Activated CD4-positive, alpha-beta memory T cell treated with anti-CD3 and anti-CD28 coated beads, Interleukin-2, amount 10 ng/mL, durations not matched to agents 7 days and 5 days (primary cell): ENCODE measurements at regions of chr12 and their contacts with region 1.

Region 1: GRCh38 chr12:103965590-103966504 is at the start of gene TDG:
- DNase-seq: peak; percentile 97
- H3K4me3 Mint-ChIP-seq: peak within 1 kb of the TSS; percentile 97
- H3K27ac Mint-ChIP-seq: peak within 1 kb of the TSS; percentile 91
- H3K4me1 Mint-ChIP-seq: peaks cover 60% of the 10 kb centered on the region
- H3K27me3 Mint-ChIP-seq: no peaks in the 10 kb centered on the region
- total RNA-seq, gene TDG: 33.0 to 34.4 TPM

Region 2: DNA sequence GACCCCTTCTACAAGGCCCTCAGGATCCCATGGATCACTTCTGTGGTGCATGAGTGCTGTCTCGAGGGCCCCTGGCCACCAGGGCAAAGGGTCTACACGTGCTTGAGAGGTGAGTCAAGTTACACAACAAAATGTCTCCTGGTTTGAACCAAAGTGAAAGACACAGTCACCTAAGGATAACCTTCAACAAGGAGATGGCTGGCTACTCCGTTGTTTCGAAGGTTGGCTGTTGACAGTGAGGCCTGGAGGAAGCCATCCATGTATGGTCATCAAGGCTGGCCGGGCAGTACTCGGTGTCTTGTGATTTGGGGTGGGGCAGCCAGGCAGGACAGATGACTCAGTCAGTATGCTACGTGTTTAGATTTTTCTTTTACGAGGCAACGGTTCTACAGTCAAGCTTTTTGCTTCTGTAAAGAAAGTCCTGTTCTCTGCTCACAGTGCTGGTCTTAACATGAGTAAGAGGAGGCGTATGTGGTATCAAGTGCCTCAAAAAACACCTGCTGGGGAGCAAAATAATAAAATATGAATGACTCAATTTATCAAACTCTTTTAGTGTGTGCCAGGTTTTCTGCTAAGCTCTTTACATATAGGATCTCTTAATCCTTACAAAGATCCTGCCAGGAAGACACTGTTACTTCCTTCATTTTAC is 106.8 kb before region 1 on chr12:
- CTCF ChIA-PET with region 1: no interaction called
- POLR2A ChIA-PET with region 1: no interaction called
- DNase-seq: no peak
- H3K4me3 Mint-ChIP-seq: no peak overlapping the region
- H3K27ac Mint-ChIP-seq: no peak overlapping the region
- H3K4me1 Mint-ChIP-seq: no peaks in the 10 kb centered on the region
- H3K27me3 Mint-ChIP-seq: no peaks in the 10 kb centered on the region

Region 3: DNA sequence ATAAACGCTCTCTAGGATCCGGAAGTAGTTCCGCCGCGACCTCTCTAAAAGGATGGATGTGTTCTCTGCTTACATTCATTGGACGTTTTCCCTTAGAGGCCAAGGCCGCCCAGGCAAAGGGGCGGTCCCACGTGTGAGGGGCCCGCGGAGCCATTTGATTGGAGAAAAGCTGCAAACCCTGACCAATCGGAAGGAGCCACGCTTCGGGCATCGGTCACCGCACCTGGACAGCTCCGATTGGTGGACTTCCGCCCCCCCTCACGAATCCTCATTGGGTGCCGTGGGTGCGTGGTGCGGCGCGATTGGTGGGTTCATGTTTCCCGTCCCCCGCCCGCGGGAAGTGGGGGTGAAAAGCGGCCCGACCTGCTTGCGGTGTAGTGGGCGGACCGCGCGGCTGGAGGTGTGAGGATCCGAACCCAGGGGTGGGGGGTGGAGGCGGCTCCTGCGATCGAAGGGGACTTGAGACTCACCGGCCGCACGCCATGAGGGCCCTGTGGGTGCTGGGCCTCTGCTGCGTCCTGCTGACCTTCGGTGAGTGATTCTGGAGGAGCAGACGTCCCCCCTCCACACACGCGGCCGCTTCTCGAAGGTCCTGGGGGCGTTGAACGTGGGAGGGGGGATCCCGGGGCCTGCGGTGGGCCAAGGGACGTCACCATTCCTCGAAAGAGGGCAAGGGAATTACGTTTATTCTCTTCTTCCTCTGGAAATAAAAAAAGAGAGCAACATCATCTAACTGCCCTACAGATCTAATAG is 35.6 kb before region 1 on chr12 and contains the start of gene HSP90B1:
- CTCF ChIA-PET with region 1: interaction called, 9 read pairs
- POLR2A ChIA-PET with region 1: interaction called, 128 read pairs
- DNase-seq: peak; percentile 100
- H3K4me3 Mint-ChIP-seq: peak within 1 kb of the TSS; percentile 83
- H3K27ac Mint-ChIP-seq: peak within 1 kb of the TSS; percentile 100
- H3K4me1 Mint-ChIP-seq: peaks cover 61% of the 10 kb centered on the region
- H3K27me3 Mint-ChIP-seq: no peaks in the 10 kb centered on the region
- total RNA-seq, gene HSP90B1: 375 to 378 TPM

Region 4: DNA sequence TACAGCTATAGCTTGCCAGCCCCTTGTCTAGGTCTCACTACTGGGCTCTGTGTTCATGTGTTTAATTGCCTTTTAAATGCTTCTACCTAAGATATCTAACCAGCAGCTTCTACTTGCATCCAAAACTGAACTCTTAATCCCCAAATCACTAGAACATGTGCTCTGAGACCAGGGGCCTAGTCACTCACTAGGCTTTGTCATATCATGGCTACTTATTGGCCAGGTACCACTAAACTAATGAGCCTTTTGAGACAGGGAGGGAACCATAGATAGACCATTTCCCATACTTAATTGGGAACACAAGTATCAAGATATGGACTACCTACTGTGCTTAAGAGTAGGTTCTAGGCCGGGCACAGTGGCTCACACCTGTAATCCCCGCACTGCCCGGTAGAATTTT is 29.2 kb before region 1 on chr12:
- CTCF ChIA-PET with region 1: no interaction called
- POLR2A ChIA-PET with region 1: interaction called, 12 read pairs
- DNase-seq: no peak
- H3K4me3 Mint-ChIP-seq: no peak overlapping the region
- H3K27ac Mint-ChIP-seq: no peak overlapping the region
- H3K4me1 Mint-ChIP-seq: peaks cover 57% of the 10 kb centered on the region
- H3K27me3 Mint-ChIP-seq: no peaks in the 10 kb centered on the region

Region 5: DNA sequence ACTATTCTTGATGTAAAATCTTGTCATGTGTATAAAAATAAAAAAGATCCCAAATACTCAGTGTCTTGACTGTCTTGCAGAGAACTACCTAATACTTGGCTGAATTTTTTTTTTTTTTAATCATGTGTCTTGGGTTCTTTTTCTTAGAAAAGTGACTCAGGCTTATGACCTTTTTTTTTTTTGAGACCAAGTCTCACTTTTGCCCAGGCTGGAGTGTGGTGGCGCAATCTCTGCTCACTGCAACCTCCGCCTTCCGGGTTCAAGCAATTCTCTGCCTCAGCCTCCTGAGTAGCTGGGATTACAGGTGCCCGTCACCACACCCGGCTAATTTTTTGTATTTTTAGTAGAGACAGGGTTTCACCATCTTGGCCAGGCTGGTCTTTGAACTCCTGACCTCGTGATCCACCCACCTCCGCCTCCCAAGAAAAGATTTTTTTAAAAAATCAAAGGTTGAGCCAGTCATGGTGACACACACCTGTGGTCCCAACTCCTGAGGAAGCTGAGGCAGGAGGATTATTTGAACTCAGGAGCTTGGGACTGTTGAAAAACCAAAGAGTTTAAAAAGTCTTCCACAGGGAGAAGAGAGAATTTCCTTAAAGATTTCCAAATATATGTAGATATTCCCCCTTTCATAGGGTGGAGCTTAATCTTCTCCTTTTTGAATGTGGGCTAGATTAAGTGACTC is 17.8 kb before region 1 on chr12:
- CTCF ChIA-PET with region 1: interaction called, 3 read pairs
- POLR2A ChIA-PET with region 1: interaction called, 159 read pairs
- DNase-seq: no peak
- H3K4me3 Mint-ChIP-seq: no peak overlapping the region
- H3K27ac Mint-ChIP-seq: peak overlapping the region; percentile 49
- H3K4me1 Mint-ChIP-seq: peaks cover 52% of the 10 kb centered on the region
- H3K27me3 Mint-ChIP-seq: no peaks in the 10 kb centered on the region

Region 6: GRCh38 chr12:103978384-103978982 is 12.6 kb after region 1 on chr12:
- CTCF ChIA-PET with region 1: interaction called, 3 read pairs
- POLR2A ChIA-PET with region 1: interaction called, 12 read pairs
- DNase-seq: no peak
- H3K4me3 Mint-ChIP-seq: no peak overlapping the region
- H3K27ac Mint-ChIP-seq: no peak overlapping the region
- H3K4me1 Mint-ChIP-seq: peaks cover 10% of the 10 kb centered on the region
- H3K27me3 Mint-ChIP-seq: no peaks in the 10 kb centered on the region

Region 7: GRCh38 chr12:104003596-104003995 is 37.7 kb after region 1 on chr12:
- CTCF ChIA-PET with region 1: no interaction called
- POLR2A ChIA-PET with region 1: no interaction called
- DNase-seq: no peak
- H3K4me3 Mint-ChIP-seq: no peak overlapping the region
- H3K27ac Mint-ChIP-seq: no peak overlapping the region
- H3K4me1 Mint-ChIP-seq: no peaks in the 10 kb centered on the region
- H3K27me3 Mint-ChIP-seq: peaks cover 51% of the 10 kb centered on the region

Region 8: DNA sequence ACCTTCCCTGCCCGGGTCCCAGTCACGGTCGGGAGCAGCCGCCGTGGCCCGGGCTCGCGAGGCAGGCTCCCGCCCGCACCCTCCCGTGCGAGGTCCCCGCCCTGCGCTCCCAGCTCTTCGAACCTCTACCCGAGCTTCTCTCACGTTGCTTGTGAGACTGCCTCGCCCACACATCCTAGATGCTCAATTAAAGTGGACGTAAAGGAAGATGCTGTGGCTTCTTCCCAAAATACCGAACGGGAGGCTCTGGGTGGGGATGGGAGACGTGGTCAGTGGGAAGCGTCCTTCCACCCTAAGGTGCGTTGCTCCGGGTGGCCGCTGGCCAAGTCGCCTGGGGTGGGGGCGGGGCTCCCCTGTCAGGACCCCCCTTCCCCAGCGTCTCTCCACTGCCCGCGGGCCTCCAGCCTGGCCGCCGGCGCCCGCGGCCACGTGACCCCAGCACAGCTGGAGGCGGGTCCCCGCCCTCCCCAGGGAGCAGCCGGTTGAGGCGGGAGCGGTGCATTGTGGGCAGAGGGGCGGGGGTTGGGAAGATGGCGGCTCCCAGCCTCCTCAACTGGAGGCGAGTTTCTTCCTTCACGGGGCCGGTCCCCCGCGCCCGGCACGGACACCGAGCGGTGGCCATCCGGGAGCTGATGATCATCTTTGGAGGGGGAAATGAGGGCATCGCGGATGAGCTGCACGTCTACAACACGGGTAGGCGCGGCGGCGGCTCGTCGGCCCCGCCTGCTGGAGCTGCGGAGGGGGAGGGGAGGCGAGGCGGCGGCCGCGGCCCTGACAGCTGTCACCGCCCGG is 98.4 kb after region 1 on chr12 and contains the start of gene HCFC2:
- CTCF ChIA-PET with region 1: no interaction called
- POLR2A ChIA-PET with region 1: interaction called, 20 read pairs
- DNase-seq: peak; percentile 92
- H3K4me3 Mint-ChIP-seq: peak within 1 kb of the TSS; percentile 95
- H3K27ac Mint-ChIP-seq: peak within 1 kb of the TSS; percentile 76
- H3K4me1 Mint-ChIP-seq: peaks cover 25% of the 10 kb centered on the region
- H3K27me3 Mint-ChIP-seq: peaks cover 14% of the 10 kb centered on the region
- total RNA-seq, gene HCFC2: 15.8 to 17.7 TPM

Region 9: DNA sequence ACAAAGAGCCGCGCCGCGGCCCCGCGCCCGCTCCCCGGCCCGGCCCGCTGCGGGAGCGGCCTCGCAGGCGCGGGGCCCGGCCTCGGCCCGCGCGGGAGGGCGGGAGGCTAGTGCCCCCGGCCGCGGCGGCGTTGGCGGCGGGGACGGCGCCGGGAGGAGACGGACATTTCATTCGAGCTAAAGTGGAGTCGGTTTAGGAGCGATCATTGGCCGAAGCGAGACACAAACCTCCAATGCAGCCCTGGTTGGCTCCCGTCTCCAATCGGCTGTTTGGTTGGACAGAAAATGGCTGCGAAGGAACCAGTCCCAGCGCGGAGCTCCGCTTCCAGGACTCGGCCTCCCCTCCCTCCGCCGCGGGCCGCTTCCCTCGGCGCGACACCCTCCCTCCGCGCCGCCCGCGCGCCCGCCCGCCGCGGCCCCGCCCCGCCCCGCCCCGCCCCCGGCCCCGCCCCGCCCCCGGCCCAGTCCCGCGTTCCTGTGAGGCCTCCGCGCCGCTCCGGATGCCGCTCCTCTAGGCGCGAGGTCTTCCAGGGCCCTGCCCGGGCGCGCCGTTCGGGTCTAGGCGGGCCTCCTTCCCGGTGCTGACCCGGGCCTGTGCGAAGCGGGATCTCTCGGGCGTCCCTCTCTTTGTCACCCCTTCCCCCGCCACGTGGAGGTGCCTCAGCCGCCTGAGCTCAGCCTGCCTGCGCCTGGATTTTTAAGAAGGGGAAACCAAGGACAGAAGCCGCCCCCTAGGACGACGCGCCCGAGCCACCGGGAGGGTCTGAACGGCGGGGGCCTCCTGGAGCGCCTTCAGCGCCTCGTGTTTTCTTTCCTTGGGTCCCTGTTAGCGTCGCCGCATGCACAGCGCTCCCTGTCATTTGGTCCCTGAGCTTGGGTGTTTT is 172.3 kb after region 1 on chr12 and contains the start of gene NFYB:
- CTCF ChIA-PET with region 1: interaction called, 3 read pairs
- POLR2A ChIA-PET with region 1: interaction called, 18 read pairs
- DNase-seq: peak; percentile 94
- H3K4me3 Mint-ChIP-seq: peak within 1 kb of the TSS; percentile 88
- H3K27ac Mint-ChIP-seq: peak within 1 kb of the TSS; percentile 86
- H3K4me1 Mint-ChIP-seq: peaks cover 23% of the 10 kb centered on the region
- H3K27me3 Mint-ChIP-seq: peaks cover 18% of the 10 kb centered on the region
- total RNA-seq, gene NFYB: 22.3 to 22.7 TPM

Region 10: DNA sequence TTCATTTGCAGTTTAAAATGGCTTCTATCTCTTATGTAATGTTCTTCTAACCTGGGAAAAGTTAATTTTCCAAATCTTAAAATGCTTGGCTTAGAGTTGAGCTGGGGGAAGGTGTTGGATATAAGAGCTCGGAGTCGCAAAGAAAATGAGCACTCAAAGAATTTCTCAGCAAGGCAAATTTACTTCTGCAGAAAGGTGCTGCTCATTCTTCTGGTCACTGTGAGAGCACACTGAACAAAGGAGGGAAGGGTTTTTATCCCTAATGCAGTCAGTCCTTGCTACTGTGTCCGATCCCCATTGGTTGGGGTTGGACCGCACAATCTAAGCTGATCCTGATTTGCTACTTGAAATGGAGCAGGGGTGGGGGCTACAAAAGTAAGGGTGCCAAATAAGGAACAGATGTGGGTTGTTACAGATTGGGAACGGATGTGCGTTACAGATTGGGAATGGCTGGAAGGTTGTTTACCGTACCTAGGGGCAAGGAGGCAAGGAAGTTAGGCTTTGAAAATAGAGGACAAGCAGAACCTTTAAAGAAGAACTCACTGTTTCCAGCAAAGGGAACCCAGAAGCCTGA is 269.2 kb after region 1 on chr12:
- CTCF ChIA-PET with region 1: no interaction called
- POLR2A ChIA-PET with region 1: no interaction called
- DNase-seq: no peak
- H3K4me3 Mint-ChIP-seq: no peak overlapping the region
- H3K27ac Mint-ChIP-seq: no peak overlapping the region
- H3K4me1 Mint-ChIP-seq: no peaks in the 10 kb centered on the region
- H3K27me3 Mint-ChIP-seq: peaks cover 8% of the 10 kb centered on the region